Astrocyte of the cerebellum (primary cell): ENCODE measurements at regions of chr14 and their contacts with region 1.

Region 1: GRCh38 chr14:31843361-31844091 is 233.6 kb upstream of the ARHGAP5 start:
- DNase-seq: no peak
- H3K4me3 ChIP-seq: no peak overlapping the region
- CTCF ChIP-seq: no peak

Region 2: GRCh38 chr14:31736804-31737203 is 106.7 kb before region 1 on chr14:
- in situ Hi-C with region 1: no loop called
- DNase-seq: no peak
- H3K4me3 ChIP-seq: no peak overlapping the region
- CTCF ChIP-seq: no peak

Region 3: DNA sequence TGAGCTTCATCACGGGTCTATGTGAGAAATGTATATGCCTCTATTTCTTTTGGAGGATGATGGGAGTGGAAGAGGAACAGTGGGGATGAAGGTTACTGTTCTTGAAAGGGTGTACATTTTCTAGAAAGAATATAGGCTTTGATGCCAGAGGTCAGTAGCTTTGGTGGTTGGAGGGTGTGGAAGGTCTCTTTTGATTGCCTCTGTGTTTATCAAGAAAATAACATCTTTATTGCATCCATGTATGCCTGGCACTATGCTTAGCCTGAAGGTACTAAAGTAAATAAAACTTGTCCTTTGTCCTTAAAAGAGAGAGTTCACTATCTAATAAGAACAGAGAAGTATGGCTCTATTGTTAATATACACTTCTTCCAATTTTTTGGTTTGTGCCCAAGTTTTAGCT is 80.5 kb before region 1 on chr14:
- in situ Hi-C with region 1: loop called (anchors 5 kb)
- DNase-seq: no peak
- H3K4me3 ChIP-seq: no peak overlapping the region
- CTCF ChIP-seq: no peak

Region 4: DNA sequence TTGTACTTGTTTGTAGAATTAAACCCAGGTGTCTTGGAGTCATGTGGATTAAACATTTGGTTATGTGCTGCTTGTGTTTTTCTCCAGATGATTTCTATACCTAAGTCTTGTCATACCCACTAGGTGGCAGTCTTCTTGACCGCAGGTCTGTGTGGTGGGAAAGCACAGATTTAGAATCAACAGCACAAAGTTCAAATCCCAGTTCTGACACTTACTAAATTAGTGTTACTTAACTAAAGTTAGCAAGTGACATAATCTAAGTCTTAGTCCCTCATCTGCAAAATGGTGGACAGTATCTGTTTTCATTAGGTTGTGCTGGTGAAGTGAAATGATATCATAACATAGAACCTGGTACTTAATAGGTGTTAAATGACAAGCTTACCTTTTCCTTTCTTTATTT is 82.6 kb after region 1 on chr14:
- in situ Hi-C with region 1: no loop called
- DNase-seq: no peak
- H3K4me3 ChIP-seq: no peak overlapping the region
- CTCF ChIP-seq: peak; percentile 51